Caco-2 (cell line): ENCODE measurements at regions of chr3 and their contacts with region 1.

Region 1: GRCh38 chr3:81338676-81339555 is 422.5 kb downstream of the GBE1 start:
- DNase-seq: peak in 1 of 2 experiments; percentile 24
- H3K4me3 ChIP-seq: no peak overlapping the region
- H3K4me3 Mint-ChIP-seq: no peak overlapping the region
- H3K27ac Mint-ChIP-seq: no peak overlapping the region
- H3K4me1 ChIP-seq: peaks cover 11% of the 10 kb centered on the region
- H3K4me1 Mint-ChIP-seq: peaks cover 7% of the 10 kb centered on the region
- H3K27me3 ChIP-seq: no peaks in the 10 kb centered on the region
- H3K27me3 Mint-ChIP-seq: no peaks in the 10 kb centered on the region
- CTCF ChIP-seq: peak; percentile 49 to 65

Region 2: GRCh38 chr3:80785470-80785869 is 553.4 kb before region 1 on chr3:
- CTCF ChIA-PET with region 1: no interaction called
- POLR2A ChIA-PET with region 1: no interaction called
- intact Hi-C with region 1: loop called (anchors 2 kb)
- DNase-seq: peak; percentile 40 to 41
- H3K4me3 ChIP-seq: no peak overlapping the region
- H3K4me3 Mint-ChIP-seq: no peak overlapping the region
- H3K27ac Mint-ChIP-seq: no peak overlapping the region
- H3K4me1 ChIP-seq: no peaks in the 10 kb centered on the region
- H3K4me1 Mint-ChIP-seq: no peaks in the 10 kb centered on the region
- H3K27me3 ChIP-seq: no peaks in the 10 kb centered on the region
- H3K27me3 Mint-ChIP-seq: no peaks in the 10 kb centered on the region
- CTCF ChIP-seq: peak; percentile 51 to 64

Region 3: DNA sequence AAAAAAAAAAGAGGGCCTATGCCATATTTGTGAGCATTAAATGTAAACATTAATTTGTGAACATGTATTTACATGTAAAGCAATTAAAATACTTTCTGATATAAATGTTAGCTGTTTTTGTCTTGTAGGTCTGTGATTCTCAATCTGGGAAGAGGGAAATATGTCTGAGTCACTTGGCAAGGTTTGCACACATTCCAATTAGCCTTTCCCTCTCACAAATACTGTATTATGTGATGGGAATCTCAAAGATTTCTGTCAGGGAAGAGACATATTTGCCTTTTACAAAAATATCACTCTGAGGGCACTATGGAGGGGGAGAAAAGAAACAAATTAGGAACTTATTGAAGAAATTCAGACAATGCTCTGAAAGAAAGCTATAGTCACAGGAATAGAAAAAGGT is 61.1 kb before region 1 on chr3:
- CTCF ChIA-PET with region 1: no interaction called
- POLR2A ChIA-PET with region 1: no interaction called
- intact Hi-C with region 1: no loop called
- DNase-seq: no peak
- H3K4me3 ChIP-seq: no peak overlapping the region
- H3K4me3 Mint-ChIP-seq: no peak overlapping the region
- H3K27ac Mint-ChIP-seq: peak overlapping the region; percentile 65
- H3K4me1 ChIP-seq: peaks cover 34% of the 10 kb centered on the region
- H3K4me1 Mint-ChIP-seq: peaks cover 28% of the 10 kb centered on the region
- H3K27me3 ChIP-seq: no peaks in the 10 kb centered on the region
- H3K27me3 Mint-ChIP-seq: no peaks in the 10 kb centered on the region
- CTCF ChIP-seq: no peak

Region 4: GRCh38 chr3:81326245-81326644 is 12.7 kb before region 1 on chr3:
- CTCF ChIA-PET with region 1: no interaction called
- POLR2A ChIA-PET with region 1: no interaction called
- intact Hi-C with region 1: no loop called
- DNase-seq: no peak
- H3K4me3 ChIP-seq: no peak overlapping the region
- H3K4me3 Mint-ChIP-seq: no peak overlapping the region
- H3K27ac Mint-ChIP-seq: no peak overlapping the region
- H3K4me1 ChIP-seq: peaks cover 6% of the 10 kb centered on the region; the same call in 1 of the 2 replicates
- H3K4me1 Mint-ChIP-seq: peaks cover 6% of the 10 kb centered on the region
- H3K27me3 ChIP-seq: no peaks in the 10 kb centered on the region
- H3K27me3 Mint-ChIP-seq: no peaks in the 10 kb centered on the region
- CTCF ChIP-seq: no peak